ENCODE measurements at regions of chr1 and their contacts with region 1.

Region 1: GRCh38 chr1:167533851-167534300 is 15.5 kb upstream of the CD247 start:
- DNase-seq: no peak
- ATAC-seq: peak; percentile 81 to 88
- H3K4me3 ChIP-seq: no peak overlapping the region
- H3K27ac ChIP-seq: no peak overlapping the region
- H3K4me1 ChIP-seq: no peaks in the 10 kb centered on the region
- H3K27me3 ChIP-seq: no peaks in the 10 kb centered on the region
- CTCF ChIP-seq: peak; percentile 62 to 88 (median 77)
- POLR2A ChIP-seq: no peak

Region 2: GRCh38 chr1:167273027-167273800 is 260.7 kb before region 1 on chr1:
- in situ Hi-C with region 1: loop called in 3 of 4 experiments (anchors 25 kb)
- intact Hi-C with region 1: loop called (anchors 5 kb)
- DNase-seq: no peak
- ATAC-seq: no peak
- H3K4me3 ChIP-seq: no peak overlapping the region
- H3K27ac ChIP-seq: no peak overlapping the region
- H3K4me1 ChIP-seq: peaks cover 50 to 69% of the 10 kb centered on the region in 2 donors
- H3K27me3 ChIP-seq: no peaks in the 10 kb centered on the region
- CTCF ChIP-seq: no peak
- POLR2A ChIP-seq: no peak

Region 3: GRCh38 chr1:167401260-167401873 is 132.5 kb before region 1 on chr1:
- in situ Hi-C with region 1: loop called in 1 of 4 experiments (anchors 10 kb)
- intact Hi-C with region 1: no loop called
- DNase-seq: no peak
- ATAC-seq: no peak
- H3K4me3 ChIP-seq: no peak overlapping the region
- H3K27ac ChIP-seq: no peak overlapping the region
- H3K4me1 ChIP-seq: no peaks in the 10 kb centered on the region
- H3K27me3 ChIP-seq: no peaks in the 10 kb centered on the region
- CTCF ChIP-seq: peak in 4 of 5 experiments; percentile 20 to 43 (median 28)
- POLR2A ChIP-seq: no peak

Region 4: GRCh38 chr1:167454894-167455785 is 78.7 kb before region 1 on chr1:
- in situ Hi-C with region 1: no loop called
- intact Hi-C with region 1: loop called (anchors 5 kb)
- DNase-seq: peak; percentile 66 to 67
- ATAC-seq: peak; percentile 79 to 80
- H3K4me3 ChIP-seq: peak overlapping the region; percentile 72 to 94 (median 76)
- H3K27ac ChIP-seq: peak overlapping the region; percentile 81 to 93 (median 86)
- H3K4me1 ChIP-seq: no peaks in the 10 kb centered on the region
- H3K27me3 ChIP-seq: no peaks in the 10 kb centered on the region
- CTCF ChIP-seq: no peak
- POLR2A ChIP-seq: peak; percentile 31 to 56

Region 5: DNA sequence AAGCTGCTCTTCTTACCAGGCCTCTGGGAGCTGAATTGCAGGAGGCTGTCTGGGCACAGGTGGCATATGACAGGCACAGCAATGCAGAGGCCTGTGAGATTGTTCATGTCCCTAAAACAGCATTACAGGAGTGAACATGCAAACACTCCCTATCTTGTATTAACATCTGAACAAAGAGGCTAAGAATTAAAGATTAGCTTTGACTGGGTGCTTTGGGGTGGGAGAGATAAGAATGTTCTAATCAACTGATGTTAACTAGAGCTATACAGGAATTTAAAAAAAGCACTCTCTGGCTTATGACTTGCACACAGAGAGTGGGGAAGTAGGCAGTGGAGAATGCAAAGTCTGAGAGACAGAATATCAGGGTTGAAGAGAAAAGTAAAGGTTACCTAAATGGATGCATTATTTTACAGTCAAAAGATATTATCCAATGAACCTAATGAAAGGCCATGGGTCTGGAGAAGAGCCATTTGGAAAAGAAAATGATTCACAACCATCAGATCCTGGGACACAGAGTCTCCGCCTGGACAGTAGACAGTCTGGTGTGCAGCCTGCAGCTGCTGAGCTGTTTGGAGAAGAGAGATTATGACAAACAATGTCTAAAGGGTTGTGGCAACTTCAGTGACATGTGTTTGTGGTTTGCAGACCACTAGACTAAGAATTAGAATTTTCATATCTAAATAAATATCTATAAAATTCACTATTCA is 1175.0 kb after region 1 on chr1:
- in situ Hi-C with region 1: no loop called
- intact Hi-C with region 1: no loop called
- DNase-seq: no peak
- ATAC-seq: peak; percentile 36 to 73
- H3K4me3 ChIP-seq: no peak overlapping the region
- H3K27ac ChIP-seq: peak overlapping the region in 1 of 4 donors; percentile 10
- H3K4me1 ChIP-seq: peaks cover 0 to 10% of the 10 kb centered on the region in 2 donors
- H3K27me3 ChIP-seq: no peaks in the 10 kb centered on the region
- CTCF ChIP-seq: no peak
- POLR2A ChIP-seq: no peak